Sciatic nerve (tissue), 2 donors: ENCODE measurements at regions of chr2 and their contacts with region 1.

Region 1: GRCh38 chr2:218452079-218452478 is 33.2 kb downstream of the VIL1 start:
- DNase-seq: no peak
- ATAC-seq: no peak

Region 2: DNA sequence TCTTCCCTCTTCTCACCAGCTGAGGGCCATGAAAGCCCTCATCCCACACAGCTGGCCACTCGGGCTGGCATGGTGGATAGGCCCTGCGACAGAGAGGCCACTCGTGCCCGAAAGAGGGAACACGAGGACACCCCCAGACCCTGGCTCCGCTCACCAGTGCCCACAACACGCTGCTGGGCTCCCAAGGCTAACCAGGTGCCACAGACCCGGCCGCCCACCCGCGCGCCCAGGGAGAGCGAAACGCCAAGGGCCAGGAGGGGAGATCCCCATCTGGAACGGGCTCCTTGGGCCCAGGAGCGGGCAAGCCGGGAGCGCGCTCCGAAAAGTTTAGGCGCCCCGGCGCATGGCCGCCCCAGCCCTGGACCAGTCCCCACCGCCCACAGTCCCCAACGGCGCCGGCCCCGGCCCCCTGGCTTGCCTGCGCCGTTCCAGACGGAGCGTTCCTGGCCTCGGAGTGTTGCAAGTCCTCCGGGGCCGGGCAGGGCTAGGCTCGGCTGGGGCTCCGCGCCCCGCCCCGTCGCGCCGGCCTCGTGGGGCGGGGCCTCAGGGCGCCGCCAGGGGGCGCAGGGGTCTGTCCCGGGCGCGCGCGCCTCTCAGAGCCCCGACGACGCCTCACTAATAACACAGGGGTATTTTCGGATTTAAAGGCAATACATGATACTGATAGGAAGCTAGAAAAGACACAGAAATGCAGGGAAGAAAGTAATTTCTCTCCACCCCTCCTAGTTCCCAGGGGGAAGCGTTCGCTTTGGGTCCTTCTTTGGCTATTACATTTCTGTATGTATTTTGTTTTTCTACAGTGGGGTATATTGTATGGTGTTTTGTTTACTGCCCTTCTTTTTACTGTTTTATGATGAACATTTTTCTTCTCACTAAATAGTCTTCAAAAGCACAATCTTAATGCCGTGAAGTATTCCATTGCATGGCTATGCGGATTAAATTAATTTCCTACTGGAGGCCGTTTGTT is 159.7 kb before region 1 on chr2 and contains the start of gene TMBIM1:
- intact Hi-C with region 1: no loop called
- DNase-seq: peak; percentile 88
- ATAC-seq: peak; percentile 88
- total RNA-seq, gene TMBIM1: 211 TPM

Region 3: DNA sequence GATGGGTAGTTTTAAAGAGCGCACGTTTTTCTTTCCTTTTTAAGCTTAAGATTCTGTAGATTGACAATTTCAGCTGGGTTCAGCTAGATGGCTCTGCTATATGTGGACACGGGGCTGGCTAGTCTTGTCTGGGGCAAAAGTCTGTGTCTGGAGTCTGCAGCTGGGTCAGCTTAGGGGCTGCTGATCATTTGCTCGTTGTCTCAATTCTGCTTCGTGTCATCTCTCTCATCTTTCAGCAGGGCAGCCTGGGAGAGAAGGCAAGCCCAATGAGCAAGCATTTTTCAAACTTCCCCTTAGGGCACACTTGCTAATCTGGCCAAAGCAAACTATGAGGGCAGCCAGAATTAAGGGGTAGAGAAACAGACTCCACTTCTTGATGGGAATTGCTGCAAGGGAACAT is 1637.9 kb after region 1 on chr2:
- intact Hi-C with region 1: loop called (anchors 10 kb)
- DNase-seq: no peak
- ATAC-seq: no peak